B cell (primary cell): ENCODE measurements at regions of chr19 and their contacts with region 1.

Region 1: DNA sequence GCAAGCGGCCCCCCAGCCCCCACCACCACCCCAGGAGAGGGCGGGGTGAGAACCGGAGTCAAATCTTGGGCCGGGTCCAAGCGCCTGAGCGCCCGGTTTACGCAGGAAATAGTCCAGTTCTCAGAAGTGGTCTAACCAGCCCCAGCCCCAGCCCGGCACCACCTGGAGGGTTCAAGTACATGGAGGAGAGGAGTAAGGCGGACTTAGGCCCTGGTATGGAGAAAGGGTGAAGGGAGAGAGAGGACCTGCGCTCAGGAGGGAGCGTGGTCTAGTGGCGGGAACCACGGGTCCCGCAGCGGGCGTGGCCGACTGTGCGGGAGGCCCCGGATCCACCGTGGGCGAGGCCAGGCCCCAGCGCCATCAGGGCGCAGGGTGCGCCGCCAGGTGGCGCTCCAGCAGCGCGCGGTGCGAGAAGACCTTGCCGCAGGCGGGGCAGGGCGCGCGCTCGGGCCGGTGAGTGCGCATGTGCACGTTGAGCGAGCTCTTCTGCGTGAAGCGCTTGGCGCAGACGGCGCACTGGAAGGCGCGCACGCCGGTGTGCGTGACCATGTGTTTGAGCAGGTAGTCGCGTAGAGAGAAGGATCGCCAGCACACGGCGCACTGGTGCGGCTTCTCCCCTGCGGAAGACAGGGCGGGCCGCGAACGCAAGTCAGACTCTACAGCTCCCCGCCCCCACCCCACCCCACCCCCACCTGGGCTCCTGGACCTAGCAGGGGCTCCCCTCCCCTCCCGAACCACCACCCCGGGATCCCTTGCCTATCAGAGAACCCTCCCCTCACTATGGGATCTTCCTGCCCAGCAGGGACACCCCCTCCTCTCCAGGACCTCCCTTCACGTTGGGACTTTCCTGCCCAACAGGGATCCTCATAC is 2.1 kb upstream of the SLC27A5 start:
- DNase-seq: peak; percentile 91
- ATAC-seq: peak; percentile 86
- H3K4me3 ChIP-seq: peak overlapping the region in 3 of 5 experiments; percentile 18 to 41 (median 34)
- H3K4me3 Mint-ChIP-seq: peak overlapping the region; percentile 80
- H3K27ac ChIP-seq: peak overlapping the region; percentile 18 to 36
- H3K27ac Mint-ChIP-seq: peak overlapping the region; percentile 71
- H3K4me1 ChIP-seq: peaks cover 20 to 29% of the 10 kb centered on the region in 2 donors
- H3K4me1 Mint-ChIP-seq: peaks cover 34% of the 10 kb centered on the region
- H3K27me3 ChIP-seq: no peaks in the 10 kb centered on the region
- H3K27me3 Mint-ChIP-seq: no peaks in the 10 kb centered on the region
- CTCF ChIP-seq: peak; percentile 76

Region 2: DNA sequence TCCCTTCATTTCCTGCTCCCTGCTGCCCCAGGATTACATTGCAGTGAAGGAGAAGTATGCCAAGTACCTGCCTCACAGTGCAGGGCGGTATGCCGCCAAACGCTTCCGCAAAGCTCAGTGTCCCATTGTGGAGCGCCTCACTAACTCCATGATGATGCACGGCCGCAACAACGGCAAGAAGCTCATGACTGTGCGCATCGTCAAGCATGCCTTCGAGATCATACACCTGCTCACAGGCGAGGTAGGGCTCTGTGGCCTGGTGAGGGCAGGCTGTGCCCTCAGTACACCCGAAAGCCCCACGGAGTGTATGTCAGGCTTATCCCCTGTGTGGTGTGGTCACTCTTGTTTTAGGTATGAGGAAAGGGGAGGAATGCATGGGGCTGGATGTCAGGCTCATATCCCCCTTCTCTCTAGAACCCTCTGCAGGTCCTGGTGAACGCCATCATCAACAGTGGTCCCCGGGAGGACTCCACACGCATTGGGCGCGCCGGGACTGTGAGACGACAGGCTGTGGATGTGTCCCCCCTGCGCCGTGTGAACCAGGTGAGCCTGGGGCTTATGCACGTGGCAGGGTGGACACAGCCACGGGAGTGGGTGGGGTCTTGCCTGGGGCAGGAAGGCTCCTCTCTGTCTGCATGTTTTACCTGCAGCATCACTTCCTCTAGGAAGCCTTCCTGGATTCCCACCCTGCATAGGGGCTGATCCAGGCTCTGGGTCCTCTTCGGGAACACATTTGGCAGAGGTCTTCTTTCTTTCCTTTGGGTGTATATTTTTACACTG is 120.8 kb before region 1 on chr19:
- CTCF ChIA-PET with region 1: no interaction called
- POLR2A ChIA-PET with region 1: no interaction called
- intact Hi-C with region 1: no loop called
- DNase-seq: peak; percentile 24
- ATAC-seq: no peak
- H3K4me3 ChIP-seq: no peak overlapping the region
- H3K4me3 Mint-ChIP-seq: no peak overlapping the region
- H3K27ac ChIP-seq: no peak overlapping the region
- H3K27ac Mint-ChIP-seq: no peak overlapping the region
- H3K4me1 ChIP-seq: peaks cover 6 to 11% of the 10 kb centered on the region in 2 donors
- H3K4me1 Mint-ChIP-seq: peaks cover 16% of the 10 kb centered on the region
- H3K27me3 ChIP-seq: peaks cover 0 to 23% (median 9%) of the 10 kb centered on the region in 4 experiments
- H3K27me3 Mint-ChIP-seq: no peaks in the 10 kb centered on the region
- CTCF ChIP-seq: no peak

Region 3: DNA sequence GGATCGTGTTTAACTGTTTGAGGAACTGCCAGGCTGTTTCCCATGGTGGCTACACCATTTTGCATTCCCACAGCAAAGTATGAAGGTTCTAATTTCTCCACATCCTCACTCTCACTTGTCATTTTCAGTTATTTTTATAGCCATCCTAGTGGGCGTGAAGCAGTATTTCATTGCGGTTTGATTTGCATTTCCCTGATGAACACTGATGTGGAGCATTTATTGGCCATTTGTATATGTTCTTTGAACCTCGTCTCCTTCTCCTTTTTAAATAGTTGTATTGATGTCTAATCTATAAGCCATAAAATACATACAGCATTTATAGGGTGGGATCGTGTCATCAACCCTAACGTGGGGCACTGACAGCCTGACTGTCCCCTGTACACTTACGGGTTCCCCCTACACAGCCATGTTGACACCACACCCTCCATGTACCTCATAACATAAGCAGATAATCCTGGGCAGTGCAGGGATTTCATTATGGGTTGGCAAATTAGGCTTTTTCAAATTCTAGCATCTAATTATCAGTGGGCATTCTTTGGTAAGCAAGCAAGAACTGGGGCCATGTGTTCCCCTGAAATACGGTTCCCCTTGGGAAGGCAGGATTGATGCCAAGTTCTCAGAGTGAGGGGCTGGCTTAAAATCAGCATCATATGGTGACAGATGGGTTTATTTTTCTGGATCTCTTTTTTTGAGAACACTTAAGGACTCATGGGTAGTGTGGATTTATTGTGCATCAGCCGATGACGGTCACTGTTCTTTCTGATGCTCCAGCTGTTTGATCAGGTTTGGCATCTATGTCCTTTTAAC is 17.3 kb after region 1 on chr19:
- CTCF ChIA-PET with region 1: no interaction called
- POLR2A ChIA-PET with region 1: no interaction called
- intact Hi-C with region 1: no loop called
- DNase-seq: peak; percentile 31
- ATAC-seq: peak; percentile 17
- H3K4me3 ChIP-seq: no peak overlapping the region
- H3K4me3 Mint-ChIP-seq: peak overlapping the region; percentile 38
- H3K27ac ChIP-seq: peak overlapping the region in 1 of 2 donors; percentile 10
- H3K27ac Mint-ChIP-seq: no peak overlapping the region
- H3K4me1 ChIP-seq: peaks cover 12 to 14% of the 10 kb centered on the region in 2 donors
- H3K4me1 Mint-ChIP-seq: peaks cover 21% of the 10 kb centered on the region
- H3K27me3 ChIP-seq: no peaks in the 10 kb centered on the region
- H3K27me3 Mint-ChIP-seq: no peaks in the 10 kb centered on the region
- CTCF ChIP-seq: no peak

Region 4: GRCh38 chr19:58581227-58582151 is 67.6 kb after region 1 on chr19:
- CTCF ChIA-PET with region 1: interaction called, 72 read pairs
- POLR2A ChIA-PET with region 1: no interaction called
- intact Hi-C with region 1: no loop called
- DNase-seq: peak; percentile 89
- ATAC-seq: peak; percentile 99
- H3K4me3 ChIP-seq: no peak overlapping the region
- H3K4me3 Mint-ChIP-seq: no peak overlapping the region
- H3K27ac ChIP-seq: no peak overlapping the region
- H3K27ac Mint-ChIP-seq: no peak overlapping the region
- H3K4me1 ChIP-seq: peaks cover 6 to 17% of the 10 kb centered on the region in 2 donors
- H3K4me1 Mint-ChIP-seq: peaks cover 28% of the 10 kb centered on the region
- H3K27me3 ChIP-seq: no peaks in the 10 kb centered on the region
- H3K27me3 Mint-ChIP-seq: no peaks in the 10 kb centered on the region
- CTCF ChIP-seq: peak; percentile 80